ENCODE measurements at regions of chr2 and their contacts with region 1.

Region 1: GRCh38 chr2:118003396-118003824 is 10.5 kb downstream of the CCDC93 start:
- DNase-seq: peak; percentile 69
- H3K4me3 ChIP-seq: peak overlapping the region in 1 of 2 experiments; percentile 9; a peak in 1 of 4 replicates
- H3K27ac ChIP-seq: peak overlapping the region in 1 of 2 experiments; percentile 18; a peak in 2 of 4 replicates
- H3K4me1 ChIP-seq: no peaks in the 10 kb centered on the region; a peak in 2 of 4 replicates
- H3K27me3 ChIP-seq: no peaks in the 10 kb centered on the region
- CTCF ChIP-seq: peak; percentile 88
- EP300 ChIP-seq: no peak
- RAD21 ChIP-seq: peak; percentile 97

Region 2: DNA sequence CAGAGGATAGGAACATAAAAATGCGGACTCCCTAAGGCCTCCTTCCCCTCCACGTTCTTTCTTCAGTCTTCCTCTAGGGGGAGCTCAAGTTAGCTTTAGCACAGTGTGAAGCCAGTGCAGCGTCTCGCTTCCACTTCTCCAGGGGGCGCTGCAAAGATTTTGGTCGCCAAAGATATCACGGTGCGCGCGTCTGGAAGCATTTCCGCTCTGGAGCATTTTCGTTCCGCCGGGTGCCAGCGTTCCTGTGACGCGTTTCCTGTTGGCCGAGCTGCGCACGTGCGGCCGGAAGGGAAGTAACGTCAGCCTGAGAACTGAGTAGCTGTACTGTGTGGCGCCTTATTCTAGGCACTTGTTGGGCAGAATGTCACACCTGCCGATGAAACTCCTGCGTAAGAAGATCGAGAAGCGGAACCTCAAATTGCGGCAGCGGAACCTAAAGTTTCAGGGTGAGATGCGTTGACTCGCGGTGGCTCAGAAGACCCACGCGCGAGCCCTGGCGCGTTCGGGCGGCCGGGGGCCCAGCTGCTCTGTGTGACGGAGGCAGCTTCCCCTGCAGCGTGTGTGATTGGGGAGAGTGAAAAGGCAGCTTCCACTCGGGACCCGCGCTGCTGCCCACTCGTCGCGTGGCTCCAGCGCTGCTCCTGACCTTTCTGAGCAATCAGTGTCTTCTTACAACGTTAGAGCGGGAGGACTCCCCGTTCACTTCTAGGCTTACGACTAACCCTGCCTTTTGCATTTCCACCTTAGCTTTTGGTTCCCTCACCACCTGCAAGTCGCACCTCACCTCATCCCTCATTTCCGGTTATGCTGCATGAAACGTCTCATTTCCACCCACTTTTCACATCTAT is 188.8 kb before region 1 on chr2 and contains the start of gene DDX18:
- CTCF ChIA-PET with region 1: interaction called, 75 read pairs
- POLR2A ChIA-PET with region 1: interaction called, 4 read pairs
- DNase-seq: peak; percentile 88
- H3K4me3 ChIP-seq: peak within 1 kb of the TSS; percentile 88
- H3K27ac ChIP-seq: peak within 1 kb of the TSS; percentile 81
- H3K4me1 ChIP-seq: peaks cover 0 to 14% of the 10 kb centered on the region in 2 experiments; a peak in 2 of 4 replicates
- H3K27me3 ChIP-seq: no peaks in the 10 kb centered on the region
- CTCF ChIP-seq: peak; percentile 99
- EP300 ChIP-seq: peak in 1 of 2 experiments; percentile 23; a peak in 2 of 4 replicates
- RAD21 ChIP-seq: peak; percentile 71
- polyA plus RNA-seq, gene DDX18: 24.1 and 40.6 TPM in 2 replicates

Region 3: GRCh38 chr2:117943013-117943672 is 60.3 kb before region 1 on chr2:
- CTCF ChIA-PET with region 1: interaction called, 12 read pairs
- POLR2A ChIA-PET with region 1: no interaction called
- DNase-seq: no peak
- H3K4me3 ChIP-seq: no peak overlapping the region
- H3K27ac ChIP-seq: peak overlapping the region in 1 of 2 experiments; percentile 65; a peak in 2 of 4 replicates
- H3K4me1 ChIP-seq: peaks cover 0 to 6% of the 10 kb centered on the region in 2 experiments; a peak in 1 of 4 replicates
- H3K27me3 ChIP-seq: no peaks in the 10 kb centered on the region
- CTCF ChIP-seq: no peak
- EP300 ChIP-seq: no peak
- RAD21 ChIP-seq: no peak

Region 4: DNA sequence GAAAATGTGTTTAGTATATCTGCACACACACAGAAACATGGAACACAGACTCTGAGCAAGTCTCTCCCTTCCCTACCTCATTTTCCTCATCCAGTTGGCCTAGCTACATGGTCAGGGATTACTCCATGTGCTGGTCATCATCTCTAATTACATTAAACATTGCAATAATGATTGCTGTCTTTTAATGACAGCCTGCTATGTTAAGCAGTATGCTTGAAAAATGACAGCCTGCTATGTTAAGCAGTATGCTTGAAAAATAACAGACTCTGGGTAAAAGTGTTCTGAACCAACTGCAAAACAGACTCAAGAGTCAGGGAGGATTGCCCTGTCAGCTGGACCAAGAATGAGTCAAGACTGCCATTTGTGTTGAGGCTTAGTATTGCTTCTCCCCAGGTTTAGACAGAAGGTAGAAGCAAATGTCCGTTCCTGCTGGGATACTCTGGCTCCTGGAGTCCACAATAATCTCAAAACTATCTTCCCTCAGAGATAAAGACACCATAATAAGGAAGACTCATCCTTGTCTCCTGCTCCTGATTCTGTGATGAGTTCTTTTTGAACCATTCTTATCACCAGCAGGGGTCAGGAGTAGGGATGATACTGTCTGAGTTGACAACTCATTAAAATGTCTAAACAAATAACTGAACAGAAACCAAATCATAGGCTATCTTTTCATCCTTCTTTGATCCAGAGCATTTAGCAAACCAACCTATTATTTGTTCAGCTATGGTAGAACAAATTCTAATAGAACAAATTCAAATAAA is 47.2 kb before region 1 on chr2:
- CTCF ChIA-PET with region 1: interaction called, 19 read pairs
- POLR2A ChIA-PET with region 1: no interaction called
- DNase-seq: no peak
- H3K4me3 ChIP-seq: no peak overlapping the region
- H3K27ac ChIP-seq: no peak overlapping the region; a peak in 2 of 4 replicates
- H3K4me1 ChIP-seq: peaks cover 0 to 31% of the 10 kb centered on the region in 2 experiments; a peak in 3 of 4 replicates
- H3K27me3 ChIP-seq: no peaks in the 10 kb centered on the region
- CTCF ChIP-seq: peak; percentile 52
- EP300 ChIP-seq: peak in 1 of 2 experiments; percentile 38; a peak in 1 of 4 replicates
- RAD21 ChIP-seq: no peak

Region 5: GRCh38 chr2:117980783-117981676 is 22.4 kb before region 1 on chr2:
- CTCF ChIA-PET with region 1: interaction called, 94 read pairs
- POLR2A ChIA-PET with region 1: no interaction called
- DNase-seq: no peak
- H3K4me3 ChIP-seq: peak overlapping the region in 1 of 2 experiments; percentile 42; a peak in 1 of 4 replicates
- H3K27ac ChIP-seq: peak overlapping the region; percentile 85 to 99
- H3K4me1 ChIP-seq: peaks cover 27 to 53% of the 10 kb centered on the region in 2 experiments
- H3K27me3 ChIP-seq: no peaks in the 10 kb centered on the region
- CTCF ChIP-seq: no peak
- EP300 ChIP-seq: peak; percentile 89 to 96
- RAD21 ChIP-seq: no peak